ENCODE measurements at regions of chr14 and their contacts with region 1.

Region 1: DNA sequence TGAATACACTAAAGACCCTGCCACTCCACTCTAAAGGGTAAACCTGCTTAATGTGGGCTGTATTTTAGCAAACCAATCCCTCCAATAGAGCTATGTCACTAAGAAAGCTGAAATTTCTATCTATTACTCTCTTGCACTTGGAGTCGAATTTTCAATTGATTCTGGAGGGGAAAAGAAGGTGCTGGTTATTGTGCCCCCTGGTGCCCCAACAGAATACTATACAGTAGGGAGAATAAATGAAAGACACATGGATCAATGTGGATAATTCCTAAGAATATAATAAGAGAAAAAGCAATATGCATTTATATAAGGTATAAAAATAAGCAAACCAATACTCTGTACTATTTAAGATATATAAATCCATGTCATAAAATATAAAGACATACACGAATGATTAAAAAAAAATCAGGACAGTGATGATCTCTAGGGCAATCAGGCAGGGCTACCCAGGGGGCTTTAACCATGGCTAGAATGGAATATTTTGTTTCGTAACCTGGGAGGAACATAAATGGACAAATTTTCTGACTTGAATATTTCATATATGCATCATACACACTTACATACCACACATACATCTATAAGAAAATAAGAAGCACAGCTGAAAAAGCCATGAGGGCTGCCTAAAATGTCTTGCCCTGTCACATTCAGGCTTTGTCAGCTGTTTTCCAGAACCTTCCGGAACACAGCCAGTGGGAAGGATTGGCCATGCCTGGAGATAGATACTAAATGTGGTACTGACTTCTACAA is 54.4 kb downstream of the EFCAB11 start:
- DNase-seq: peak; percentile 64
- H3K4me3 Mint-ChIP-seq: no peak overlapping the region
- H3K27ac Mint-ChIP-seq: no peak overlapping the region
- H3K4me1 Mint-ChIP-seq: peaks cover 9% of the 10 kb centered on the region
- H3K27me3 Mint-ChIP-seq: peaks cover 5% of the 10 kb centered on the region

Region 2: DNA sequence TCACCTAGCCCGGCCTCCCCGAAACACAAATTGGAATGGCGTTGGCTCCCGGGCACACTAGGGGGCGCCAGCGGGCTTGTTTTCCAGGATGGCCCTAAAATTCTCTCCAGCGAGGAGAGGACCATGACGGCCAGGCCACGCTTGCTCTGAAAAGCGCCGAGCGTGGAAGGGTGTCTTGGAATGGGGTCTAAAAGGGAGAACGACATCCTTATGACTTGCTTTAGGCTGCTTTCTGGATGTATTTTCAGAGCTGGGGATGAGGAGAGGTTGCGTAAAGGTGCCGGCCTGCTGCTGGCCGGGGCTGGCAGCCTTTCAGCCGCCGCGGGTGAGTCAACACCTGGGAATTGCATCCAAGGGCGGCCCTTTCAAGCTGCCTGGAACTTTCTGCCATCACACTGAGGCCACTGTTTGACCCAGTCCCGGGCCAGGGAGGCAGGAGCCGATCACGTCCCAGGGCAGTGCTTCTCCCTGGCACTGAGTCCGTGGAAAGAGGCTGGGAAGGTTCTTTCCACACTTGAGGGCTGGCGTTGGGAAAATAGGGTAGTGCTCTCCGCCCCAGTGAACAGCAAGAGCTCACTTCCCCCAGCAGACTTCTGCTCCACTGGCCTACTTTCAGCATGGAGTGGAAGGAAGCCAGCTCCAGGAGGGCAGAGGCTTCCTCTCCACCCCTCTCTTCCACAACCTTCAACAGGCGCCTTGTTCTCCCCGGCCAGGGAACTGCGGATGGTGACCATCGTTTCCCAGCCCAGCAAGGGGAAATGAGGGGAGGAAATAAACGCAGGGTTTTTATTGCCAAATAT is 859.4 kb before region 1 on chr14:
- intact Hi-C with region 1: loop called (anchors 1 kb)
- DNase-seq: peak; percentile 93
- H3K4me3 Mint-ChIP-seq: peak overlapping the region; percentile 70
- H3K27ac Mint-ChIP-seq: no peak overlapping the region
- H3K4me1 Mint-ChIP-seq: peaks cover 7% of the 10 kb centered on the region
- H3K27me3 Mint-ChIP-seq: peaks cover 14% of the 10 kb centered on the region

Region 3: GRCh38 chr14:89406941-89407340 is 493.1 kb before region 1 on chr14:
- intact Hi-C with region 1: no loop called
- DNase-seq: no peak
- H3K4me3 Mint-ChIP-seq: no peak overlapping the region
- H3K27ac Mint-ChIP-seq: no peak overlapping the region
- H3K4me1 Mint-ChIP-seq: peaks cover 39% of the 10 kb centered on the region
- H3K27me3 Mint-ChIP-seq: no peaks in the 10 kb centered on the region

Region 4: GRCh38 chr14:89922031-89922907 is 22.2 kb after region 1 on chr14:
- intact Hi-C with region 1: no loop called
- DNase-seq: peak; percentile 38
- H3K4me3 Mint-ChIP-seq: no peak overlapping the region
- H3K27ac Mint-ChIP-seq: no peak overlapping the region
- H3K4me1 Mint-ChIP-seq: no peaks in the 10 kb centered on the region
- H3K27me3 Mint-ChIP-seq: no peaks in the 10 kb centered on the region

Region 5: DNA sequence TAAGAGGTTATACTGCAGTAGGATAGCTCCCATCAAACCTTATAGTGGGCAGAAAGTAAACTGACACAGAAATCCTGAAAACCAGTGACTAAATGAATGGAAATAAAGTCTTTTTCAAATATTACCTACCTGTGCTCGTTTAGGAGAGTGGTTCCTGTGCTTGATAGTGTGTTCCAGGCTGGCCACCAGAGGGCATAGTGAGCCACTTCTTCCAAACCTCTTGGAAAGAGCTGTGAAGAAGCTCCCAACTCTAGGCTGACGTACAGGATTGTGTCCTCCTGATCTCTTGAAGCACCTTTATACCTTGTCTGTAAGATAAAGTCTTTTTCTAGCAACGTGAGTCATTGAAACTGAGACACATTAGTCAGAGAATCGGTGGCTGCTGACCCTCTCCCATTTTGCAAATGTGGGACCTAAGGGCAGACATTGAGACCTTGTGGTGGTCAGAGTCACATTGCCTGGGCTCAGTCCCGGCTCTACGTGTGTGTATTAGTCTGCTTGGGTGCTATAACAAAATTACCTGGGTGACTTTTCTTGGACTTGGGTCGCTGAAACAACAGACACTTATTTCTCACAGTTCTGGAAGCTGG is 73.2 kb after region 1 on chr14:
- intact Hi-C with region 1: no loop called
- DNase-seq: peak; percentile 84
- H3K4me3 Mint-ChIP-seq: no peak overlapping the region
- H3K27ac Mint-ChIP-seq: no peak overlapping the region
- H3K4me1 Mint-ChIP-seq: peaks cover 4% of the 10 kb centered on the region
- H3K27me3 Mint-ChIP-seq: no peaks in the 10 kb centered on the region